ENCODE measurements at regions of chr1 and their contacts with region 1.

Region 1: DNA sequence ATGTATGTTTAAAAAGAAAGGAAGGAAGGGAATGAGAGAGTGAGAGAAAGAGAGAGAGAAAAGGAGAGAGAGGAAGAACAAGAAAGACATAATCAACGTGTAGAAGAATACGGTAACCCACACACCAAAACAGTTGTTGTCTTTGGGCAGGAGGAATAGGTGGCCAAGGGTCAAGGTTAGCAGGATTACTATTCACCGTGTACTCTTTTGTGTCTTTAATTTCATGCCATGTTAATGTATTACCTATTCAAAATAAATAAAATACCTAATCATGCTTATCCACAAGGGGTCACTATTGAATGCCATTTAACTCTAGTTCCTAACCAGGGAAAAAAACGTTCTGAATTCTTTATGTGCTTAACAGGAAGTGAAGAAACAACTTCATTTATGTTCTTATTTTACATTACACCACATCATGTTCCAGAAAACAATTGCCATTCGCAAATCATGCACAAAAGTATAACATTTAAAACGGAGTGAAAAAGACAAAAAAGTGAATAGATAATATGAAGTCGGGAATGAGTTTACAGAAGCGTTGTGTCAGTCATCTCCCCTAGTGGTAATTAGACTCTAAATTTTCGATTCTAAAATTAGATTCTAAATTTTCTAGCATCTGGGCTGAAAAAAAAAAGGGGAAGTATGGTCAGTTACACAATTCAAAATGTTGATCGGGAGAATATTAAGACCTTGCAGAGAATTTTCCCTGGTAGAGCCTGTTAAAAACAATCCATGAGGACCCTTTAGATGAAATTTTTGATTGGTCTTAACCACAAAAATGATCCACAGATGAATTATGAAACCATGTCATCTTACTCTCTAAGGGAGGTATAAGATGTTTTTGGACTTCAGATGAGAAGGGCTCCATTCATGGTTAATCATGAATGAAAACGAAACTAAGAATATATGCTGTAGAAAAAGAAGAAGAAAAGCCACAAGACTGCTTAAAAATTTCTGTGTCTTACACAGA is 700 bp upstream of the KMO start:
- DNase-seq: no peak

Region 2: GRCh38 chr1:241592273-241592958 is 60.9 kb after region 1 on chr1:
- intact Hi-C with region 1: loop called (anchors 10 kb)
- DNase-seq: no peak

Region 3: DNA sequence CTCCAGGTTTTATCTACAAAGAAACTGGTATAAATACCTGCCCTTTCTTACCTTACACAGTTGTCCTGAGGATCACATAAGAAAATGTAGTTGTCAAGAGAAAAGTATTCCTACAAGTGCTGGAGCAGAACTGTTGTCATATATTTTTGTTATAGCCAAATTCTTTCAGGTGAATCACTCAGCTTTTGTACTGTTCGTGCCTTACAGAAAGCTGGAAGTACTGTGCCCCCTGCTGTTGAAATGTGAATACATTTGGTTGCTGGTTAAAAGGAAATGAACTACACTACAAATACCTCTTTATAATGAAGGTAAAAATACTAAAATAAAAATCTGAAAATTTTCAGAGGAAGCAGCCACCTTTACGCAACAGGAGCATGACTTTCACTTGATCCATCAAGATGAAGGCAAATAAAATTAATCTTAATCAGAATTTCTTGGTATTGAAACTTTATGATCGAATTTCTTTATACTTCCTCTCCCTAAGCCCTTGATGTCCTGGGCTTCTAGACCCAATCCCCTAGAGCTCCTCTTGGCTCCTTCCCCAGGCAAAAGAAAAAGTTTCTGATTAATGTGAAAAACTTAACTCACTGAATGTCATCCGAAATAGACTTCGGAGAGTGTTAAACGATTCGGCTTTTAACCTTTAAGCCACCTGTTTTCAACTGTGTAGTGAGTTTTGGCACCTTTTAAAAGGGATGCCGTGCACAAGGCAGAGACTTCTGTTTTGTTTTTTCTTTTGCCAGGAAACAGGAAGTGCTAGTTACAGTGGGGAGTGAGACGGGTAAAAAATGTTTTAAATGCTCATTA is 96.2 kb after region 1 on chr1:
- intact Hi-C with region 1: loop called (anchors 5 kb)
- DNase-seq: no peak

Region 4: GRCh38 chr1:241834733-241835377 is 303.4 kb after region 1 on chr1:
- intact Hi-C with region 1: loop called (anchors 5 kb)
- DNase-seq: no peak

Region 5: GRCh38 chr1:241998412-241998921 is 467.0 kb after region 1 on chr1:
- intact Hi-C with region 1: loop called (anchors 10 kb)
- DNase-seq: peak in 9 of 10 donors; percentile 31 to 86 (median 52)

Measured in posterior cingulate gyrus (tissue), 11 donors.